ENCODE measurements at regions of chr15 and their contacts with region 1.

Region 1: DNA sequence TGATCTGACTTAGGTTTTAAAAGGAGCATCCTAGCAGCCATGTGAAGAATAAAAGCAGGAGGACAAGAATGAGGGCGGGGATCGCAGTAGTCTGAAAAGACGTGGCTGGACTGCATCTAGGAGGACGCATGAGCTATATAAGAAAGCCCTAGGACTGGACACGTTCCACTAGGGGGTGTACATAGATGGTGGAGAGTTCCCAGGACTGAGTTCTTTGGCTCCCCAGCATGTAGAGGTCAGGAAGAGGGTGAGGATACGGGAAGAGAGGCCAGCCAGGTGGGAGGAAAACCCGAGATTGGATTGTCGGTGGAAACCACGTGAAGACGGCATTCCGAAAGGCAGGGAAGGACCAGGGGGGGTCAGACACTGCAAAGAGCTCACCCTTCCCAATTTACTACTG is 64.2 kb upstream of the CFAP161 start:
- DNase-seq: no peak
- H3K4me3 ChIP-seq: no peak overlapping the region
- H3K27ac ChIP-seq: no peak overlapping the region
- H3K4me1 ChIP-seq: no peaks in the 10 kb centered on the region
- H3K27me3 ChIP-seq: no peaks in the 10 kb centered on the region
- CTCF ChIP-seq: no peak

Region 2: GRCh38 chr15:80234883-80235282 is 835.0 kb before region 1 on chr15:
- CTCF ChIA-PET with region 1: no interaction called
- POLR2A ChIA-PET with region 1: no interaction called
- intact Hi-C with region 1: no loop called
- DNase-seq: peak; percentile 35
- H3K4me3 ChIP-seq: no peak overlapping the region
- H3K27ac ChIP-seq: no peak overlapping the region
- H3K4me1 ChIP-seq: no peaks in the 10 kb centered on the region
- H3K27me3 ChIP-seq: peaks cover 42% of the 10 kb centered on the region
- CTCF ChIP-seq: peak; percentile 58

Region 3: GRCh38 chr15:81029414-81030300 is 40.3 kb before region 1 on chr15:
- CTCF ChIA-PET with region 1: no interaction called
- POLR2A ChIA-PET with region 1: no interaction called
- intact Hi-C with region 1: no loop called
- DNase-seq: no peak
- H3K4me3 ChIP-seq: no peak overlapping the region
- H3K27ac ChIP-seq: no peak overlapping the region
- H3K4me1 ChIP-seq: no peaks in the 10 kb centered on the region
- H3K27me3 ChIP-seq: no peaks in the 10 kb centered on the region
- CTCF ChIP-seq: no peak

Region 4: DNA sequence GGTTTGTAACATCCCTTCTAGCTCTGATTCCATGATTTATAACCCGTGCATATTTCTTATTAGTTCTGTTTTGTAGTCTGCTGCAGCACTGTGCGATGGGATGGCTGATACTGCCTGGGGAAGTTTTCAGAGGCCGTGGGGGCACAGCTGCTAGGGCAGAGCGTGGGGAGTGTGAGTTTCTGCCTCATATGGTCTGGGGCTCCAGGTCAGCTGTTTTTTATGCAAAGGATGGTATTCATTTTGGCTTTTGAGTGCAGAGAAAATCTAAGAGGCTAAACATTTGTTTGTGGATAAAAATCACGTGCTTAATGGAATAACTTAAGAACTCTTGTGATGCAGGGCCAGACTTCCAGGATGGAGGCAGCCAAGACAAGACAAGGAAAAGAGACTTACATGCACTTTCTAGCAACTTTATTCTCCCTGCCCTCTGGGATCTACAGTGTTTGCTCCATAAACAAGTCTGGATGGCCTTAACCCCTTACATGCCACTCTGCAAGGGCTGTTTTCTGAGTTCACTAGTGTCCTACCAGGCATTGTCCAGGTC is 18.6 kb after region 1 on chr15:
- CTCF ChIA-PET with region 1: no interaction called
- POLR2A ChIA-PET with region 1: no interaction called
- intact Hi-C with region 1: loop called (anchors 2 kb)
- DNase-seq: no peak
- H3K4me3 ChIP-seq: no peak overlapping the region
- H3K27ac ChIP-seq: no peak overlapping the region
- H3K4me1 ChIP-seq: no peaks in the 10 kb centered on the region
- H3K27me3 ChIP-seq: no peaks in the 10 kb centered on the region
- CTCF ChIP-seq: no peak